Caco-2 (cell line): ENCODE measurements at regions of chr7 and their contacts with region 1.

Region 1: GRCh38 chr7:84399661-84400060 is 205.1 kb upstream of the SEMA3A start:
- DNase-seq: no peak
- H3K4me3 ChIP-seq: no peak overlapping the region
- H3K4me3 Mint-ChIP-seq: no peak overlapping the region
- H3K27ac Mint-ChIP-seq: no peak overlapping the region
- H3K4me1 ChIP-seq: no peaks in the 10 kb centered on the region
- H3K4me1 Mint-ChIP-seq: no peaks in the 10 kb centered on the region
- H3K27me3 ChIP-seq: no peaks in the 10 kb centered on the region
- H3K27me3 Mint-ChIP-seq: no peaks in the 10 kb centered on the region
- CTCF ChIP-seq: no peak

Region 2: DNA sequence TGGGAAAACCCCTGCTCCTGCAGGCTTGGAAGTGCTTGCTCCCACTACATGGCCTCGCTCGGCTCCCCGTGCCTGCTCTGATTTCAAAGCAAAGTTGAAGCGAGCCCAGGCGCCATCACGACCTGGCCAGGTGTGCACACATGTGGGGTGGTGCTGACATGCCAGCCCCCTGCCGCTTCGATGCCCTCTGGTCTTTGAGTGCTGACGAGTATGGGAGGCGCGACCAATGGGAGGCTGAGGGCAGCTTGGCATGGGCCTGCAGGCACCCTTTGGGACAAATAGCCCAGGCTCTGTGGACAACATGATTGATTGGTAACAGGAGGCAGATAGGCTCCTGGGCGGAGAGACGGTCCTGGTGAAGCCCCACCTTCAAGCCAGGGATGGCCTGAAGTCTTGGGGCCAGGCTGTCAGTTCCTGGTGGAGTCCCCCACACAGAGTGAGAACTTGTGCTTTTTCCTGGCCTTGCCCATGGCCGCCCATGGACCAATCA is 47.4 kb after region 1 on chr7:
- CTCF ChIA-PET with region 1: no interaction called
- POLR2A ChIA-PET with region 1: no interaction called
- intact Hi-C with region 1: loop called (anchors 2 kb)
- DNase-seq: no peak
- H3K4me3 ChIP-seq: no peak overlapping the region
- H3K4me3 Mint-ChIP-seq: no peak overlapping the region
- H3K27ac Mint-ChIP-seq: no peak overlapping the region
- H3K4me1 ChIP-seq: 0 out of 2 replicates have a peak, but pooled peaks cover 3% of the 10 kb centered on the region
- H3K4me1 Mint-ChIP-seq: no peaks in the 10 kb centered on the region
- H3K27me3 ChIP-seq: no peaks in the 10 kb centered on the region
- H3K27me3 Mint-ChIP-seq: no peaks in the 10 kb centered on the region
- CTCF ChIP-seq: no peak

Region 3: DNA sequence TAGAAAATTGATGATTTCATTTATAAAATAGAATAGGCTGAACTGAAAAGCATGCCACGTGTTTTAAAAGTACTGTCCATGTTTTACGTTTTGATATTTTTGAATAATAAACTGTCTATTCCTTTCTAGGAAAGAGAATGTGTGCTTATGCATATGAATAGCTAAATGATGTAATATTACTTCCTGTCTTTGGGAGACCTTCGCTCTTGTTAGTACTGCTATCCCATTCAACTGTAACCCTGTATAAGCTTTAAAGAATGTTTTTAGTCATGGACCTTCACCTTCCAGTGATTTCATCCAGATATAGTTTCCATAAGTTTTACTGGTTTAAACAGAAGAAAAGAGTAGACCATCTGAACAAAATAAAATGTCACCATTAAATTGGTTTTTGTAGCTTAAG is 69.4 kb after region 1 on chr7:
- CTCF ChIA-PET with region 1: no interaction called
- POLR2A ChIA-PET with region 1: no interaction called
- intact Hi-C with region 1: no loop called
- DNase-seq: no peak
- H3K4me3 ChIP-seq: no peak overlapping the region
- H3K4me3 Mint-ChIP-seq: no peak overlapping the region
- H3K27ac Mint-ChIP-seq: no peak overlapping the region
- H3K4me1 ChIP-seq: no peaks in the 10 kb centered on the region
- H3K4me1 Mint-ChIP-seq: no peaks in the 10 kb centered on the region
- H3K27me3 ChIP-seq: no peaks in the 10 kb centered on the region
- H3K27me3 Mint-ChIP-seq: peaks cover 6% of the 10 kb centered on the region
- CTCF ChIP-seq: no peak